Naive thymus-derived CD4-positive, alpha-beta T cell (primary cell): ENCODE measurements at regions of chr17 and their contacts with region 1.

Region 1: DNA sequence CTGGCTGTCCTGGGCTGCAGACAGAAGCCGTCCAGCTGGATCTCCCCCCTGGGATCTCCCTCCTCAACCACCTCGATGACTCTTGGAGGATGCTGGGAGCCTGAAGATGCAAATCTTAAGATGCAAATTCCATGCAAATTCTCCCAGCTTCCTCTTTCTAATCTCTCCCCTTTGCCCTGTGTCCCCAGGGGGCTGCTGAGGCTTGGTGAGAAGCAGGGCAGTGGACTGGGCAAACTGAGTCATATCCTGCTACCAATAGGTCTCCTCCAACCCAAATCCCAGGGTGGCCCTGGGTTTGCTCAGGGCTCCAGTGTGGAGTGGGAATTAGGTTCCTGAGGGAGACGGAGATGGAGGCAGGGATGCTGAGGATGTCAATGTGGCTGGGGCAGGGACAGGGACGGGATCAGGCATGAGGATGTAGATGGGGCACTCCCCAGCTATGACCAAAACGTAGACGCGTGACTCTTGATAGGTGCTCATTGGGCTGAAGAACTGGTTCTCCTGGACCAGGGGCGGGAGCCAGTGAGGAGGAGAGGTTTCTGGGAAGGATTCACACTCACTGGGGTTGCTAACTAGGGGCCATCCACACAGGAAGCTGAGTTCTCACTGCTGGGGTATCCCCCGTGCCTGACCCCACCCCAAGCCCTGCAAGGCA is 3.6 kb upstream of the ALOX12B start:
- DNase-seq: no peak
- ATAC-seq: no peak
- H3K4me3 ChIP-seq: no peak overlapping the region
- H3K4me3 Mint-ChIP-seq: no peak overlapping the region
- H3K27ac ChIP-seq: no peak overlapping the region
- H3K27ac Mint-ChIP-seq: no peak overlapping the region
- H3K4me1 ChIP-seq: peaks cover 5 to 13% of the 10 kb centered on the region in 2 donors
- H3K4me1 Mint-ChIP-seq: peaks cover 6 to 17% (median 15%) of the 10 kb centered on the region in 7 donors
- H3K27me3 ChIP-seq: peaks cover 0 to 5% of the 10 kb centered on the region in 2 donors
- H3K27me3 Mint-ChIP-seq: peaks cover 4 to 49% (median 21%) of the 10 kb centered on the region in 5 donors

Region 2: GRCh38 chr17:7803981-7804380 is 287.2 kb before region 1 on chr17:
- CTCF ChIA-PET with region 1: no interaction called
- POLR2A ChIA-PET with region 1: no interaction called
- intact Hi-C with region 1: no loop called
- DNase-seq: no peak
- ATAC-seq: no peak
- H3K4me3 ChIP-seq: no peak overlapping the region
- H3K4me3 Mint-ChIP-seq: no peak overlapping the region
- H3K27ac ChIP-seq: no peak overlapping the region
- H3K27ac Mint-ChIP-seq: no peak overlapping the region
- H3K4me1 ChIP-seq: no peaks in the 10 kb centered on the region
- H3K4me1 Mint-ChIP-seq: no peaks in the 10 kb centered on the region
- H3K27me3 ChIP-seq: peaks cover 0 to 3% of the 10 kb centered on the region in 2 donors
- H3K27me3 Mint-ChIP-seq: peaks cover 7 to 40% (median 12%) of the 10 kb centered on the region in 5 donors

Region 3: DNA sequence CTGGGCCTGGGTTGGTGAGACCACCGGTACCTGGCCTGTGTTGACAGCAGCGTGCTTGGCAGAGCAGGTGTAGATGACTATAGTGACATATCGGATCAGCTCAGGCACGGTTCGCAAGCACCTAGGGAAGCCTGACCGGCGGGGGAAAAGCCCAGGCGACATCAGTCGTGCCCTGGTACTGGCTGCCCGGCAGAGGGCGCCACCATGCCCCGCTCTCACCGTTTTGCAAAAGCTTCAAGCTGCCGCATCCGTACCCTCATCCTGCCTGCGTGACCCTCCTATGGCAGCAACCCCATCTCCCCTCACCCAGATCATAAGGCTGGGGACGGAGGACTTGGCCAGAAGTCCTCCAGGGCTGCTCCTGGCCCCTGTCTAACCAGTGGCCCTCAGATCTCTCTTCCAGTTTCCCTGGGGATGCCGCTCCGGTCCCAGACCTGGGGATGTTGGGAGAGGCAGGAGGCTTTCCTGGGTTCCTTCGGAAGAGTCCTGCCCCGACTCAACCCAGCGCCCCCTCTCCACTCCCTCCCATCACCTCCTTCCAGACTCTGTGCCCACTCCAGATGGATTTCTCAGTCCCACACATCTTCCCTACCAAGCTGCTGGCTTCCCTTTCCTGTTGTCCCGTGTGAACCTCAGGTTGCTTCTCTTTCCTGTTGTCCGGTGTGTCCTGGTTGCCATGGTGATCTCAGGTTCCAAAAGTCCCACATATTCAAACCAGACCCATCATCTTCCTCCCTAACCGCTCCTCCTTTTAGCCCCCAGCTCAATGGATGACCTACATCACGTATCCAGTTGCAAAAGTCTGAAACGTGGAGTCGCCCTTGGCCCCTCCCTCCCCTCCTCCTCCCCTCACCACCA is 17.3 kb before region 1 on chr17:
- CTCF ChIA-PET with region 1: interaction called, 18 read pairs
- POLR2A ChIA-PET with region 1: interaction called, 4 read pairs
- intact Hi-C with region 1: loop called in 1 of 2 experiments (anchors 1 kb)
- DNase-seq: peak; percentile 64 to 86 (median 82)
- ATAC-seq: peak; percentile 91
- H3K4me3 ChIP-seq: peak overlapping the region; percentile 49
- H3K4me3 Mint-ChIP-seq: peak overlapping the region; percentile 84 to 95 (median 88)
- H3K27ac ChIP-seq: no peak overlapping the region
- H3K27ac Mint-ChIP-seq: peak overlapping the region in 7 of 9 donors; percentile 28 to 88 (median 53)
- H3K4me1 ChIP-seq: peaks cover 7 to 24% of the 10 kb centered on the region in 2 donors
- H3K4me1 Mint-ChIP-seq: peaks cover 7 to 28% (median 25%) of the 10 kb centered on the region in 7 donors
- H3K27me3 ChIP-seq: peaks cover 7 to 9% of the 10 kb centered on the region in 2 donors
- H3K27me3 Mint-ChIP-seq: peaks cover 20 to 61% (median 29%) of the 10 kb centered on the region in 5 donors

Region 4: GRCh38 chr17:8079291-8080207 is 11.6 kb before region 1 on chr17:
- CTCF ChIA-PET with region 1: interaction called, 18 read pairs
- POLR2A ChIA-PET with region 1: interaction called, 4 read pairs
- intact Hi-C with region 1: loop called in 1 of 2 experiments (anchors 1 kb)
- DNase-seq: peak; percentile 63 to 89 (median 79)
- ATAC-seq: peak; percentile 90
- H3K4me3 ChIP-seq: peak overlapping the region; percentile 62
- H3K4me3 Mint-ChIP-seq: peak overlapping the region; percentile 88 to 93 (median 91)
- H3K27ac ChIP-seq: peak overlapping the region; percentile 62
- H3K27ac Mint-ChIP-seq: peak overlapping the region; percentile 42 to 92 (median 79)
- H3K4me1 ChIP-seq: peaks cover 13 to 14% of the 10 kb centered on the region in 2 donors
- H3K4me1 Mint-ChIP-seq: peaks cover 10 to 21% (median 18%) of the 10 kb centered on the region in 7 donors
- H3K27me3 ChIP-seq: peaks cover 0 to 4% of the 10 kb centered on the region in 2 donors
- H3K27me3 Mint-ChIP-seq: peaks cover 7 to 18% (median 9%) of the 10 kb centered on the region in 5 donors